Activated CD4-positive, alpha-beta memory T cell treated with anti-CD3 and anti-CD28 coated beads for 36 hours (primary cell): ENCODE measurements at regions of chr1 and their contacts with region 1.

Region 1: GRCh38 chr1:25819576-25820246 is at the start of gene MTFR1L:
- DNase-seq: peak; percentile 97
- H3K4me3 Mint-ChIP-seq: peak within 1 kb of the TSS; percentile 95
- H3K27ac Mint-ChIP-seq: peak within 1 kb of the TSS; percentile 89
- H3K4me1 Mint-ChIP-seq: peaks cover 33% of the 10 kb centered on the region
- H3K27me3 Mint-ChIP-seq: no peaks in the 10 kb centered on the region
- total RNA-seq, gene MTFR1L: 28.0 to 31.1 TPM

Region 2: DNA sequence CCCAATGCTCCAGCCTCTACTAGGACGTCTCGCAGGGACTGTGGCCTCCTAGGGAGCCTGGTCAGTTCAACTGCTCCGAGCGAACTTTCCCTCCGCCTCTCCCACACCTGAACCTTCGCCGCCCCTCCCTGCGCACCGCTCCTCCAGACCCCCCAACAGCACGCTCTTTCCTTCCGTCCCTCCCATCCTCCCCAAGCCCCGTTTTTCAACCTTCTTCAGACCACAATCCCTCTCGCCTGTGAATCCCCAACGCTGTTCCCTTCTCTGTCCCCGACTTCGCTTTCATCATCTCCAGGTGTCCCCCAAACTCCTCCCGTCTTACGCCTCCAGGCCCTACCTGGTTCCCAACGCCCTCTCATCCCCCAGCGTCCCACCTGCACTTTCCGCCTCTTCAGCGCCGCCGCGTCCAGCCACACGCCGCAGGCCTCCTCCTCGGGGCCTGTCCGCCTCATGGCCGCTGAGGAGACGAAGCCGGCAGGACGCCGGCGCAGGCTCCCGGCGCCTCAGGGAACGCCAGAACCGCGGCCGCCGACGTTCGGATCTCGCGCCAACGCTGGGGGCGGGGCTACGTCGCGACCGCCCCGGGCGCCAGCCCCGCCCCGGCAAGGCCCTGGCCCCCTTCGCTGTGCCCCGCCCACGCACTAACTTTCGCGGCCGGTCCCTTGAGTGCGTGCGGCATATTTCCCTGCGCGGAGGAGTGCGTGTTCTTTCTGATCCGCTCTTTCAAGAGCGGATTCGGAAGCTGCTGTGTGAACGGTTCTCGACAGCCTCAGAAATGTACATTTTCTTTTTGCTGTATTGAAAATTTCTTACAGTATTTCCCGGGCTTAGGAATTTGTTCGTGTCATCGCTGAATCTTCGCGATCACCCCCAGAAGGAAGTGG is 39.4 kb after region 1 on chr1 and contains the start of gene AUNIP:
- CTCF ChIA-PET with region 1: interaction called, 3 read pairs
- POLR2A ChIA-PET with region 1: interaction called, 4 read pairs
- intact Hi-C with region 1: loop called (anchors 2 kb)
- DNase-seq: peak; percentile 93
- H3K4me3 Mint-ChIP-seq: peak within 1 kb of the TSS; percentile 86
- H3K27ac Mint-ChIP-seq: peak within 1 kb of the TSS; percentile 86
- H3K4me1 Mint-ChIP-seq: peaks cover 15% of the 10 kb centered on the region
- H3K27me3 Mint-ChIP-seq: no peaks in the 10 kb centered on the region
- total RNA-seq, gene AUNIP: 7.8 to 10.1 TPM